A673 (cell line): ENCODE measurements at regions of chr16 and their contacts with region 1.

Region 1: DNA sequence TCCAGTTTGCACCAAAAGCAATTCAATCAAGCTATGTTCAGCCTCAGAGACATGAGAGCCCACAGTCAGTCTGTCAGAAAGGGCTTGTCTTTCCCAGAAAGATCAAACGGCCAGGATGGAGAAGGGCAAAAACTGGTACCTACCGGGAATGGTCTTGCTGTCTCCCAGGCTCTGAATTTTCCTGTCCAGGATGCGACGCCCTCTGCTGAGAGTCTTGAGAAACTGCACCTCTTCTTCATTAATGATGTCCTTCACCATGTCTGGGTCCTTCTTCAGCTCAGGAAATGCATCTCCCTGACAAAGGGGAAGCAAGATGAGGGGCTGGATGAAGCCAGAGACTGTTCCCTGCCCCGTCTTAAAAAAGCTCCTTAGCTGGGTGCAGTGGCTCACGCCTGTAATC is 15.8 kb upstream of the EXOSC6 start:
- DNase-seq: peak; percentile 75
- H3K4me3 ChIP-seq: no peak overlapping the region
- H3K27ac ChIP-seq: no peak overlapping the region
- H3K4me1 ChIP-seq: no peaks in the 10 kb centered on the region
- H3K27me3 ChIP-seq: no peaks in the 10 kb centered on the region
- CTCF ChIP-seq: peak; percentile 72

Region 2: GRCh38 chr16:69906838-69907401 is 360.6 kb before region 1 on chr16:
- CTCF ChIA-PET with region 1: no interaction called
- POLR2A ChIA-PET with region 1: no interaction called
- intact Hi-C with region 1: no loop called
- DNase-seq: no peak
- H3K4me3 ChIP-seq: no peak overlapping the region
- H3K27ac ChIP-seq: no peak overlapping the region
- H3K4me1 ChIP-seq: no peaks in the 10 kb centered on the region
- H3K27me3 ChIP-seq: no peaks in the 10 kb centered on the region
- CTCF ChIP-seq: no peak

Region 3: DNA sequence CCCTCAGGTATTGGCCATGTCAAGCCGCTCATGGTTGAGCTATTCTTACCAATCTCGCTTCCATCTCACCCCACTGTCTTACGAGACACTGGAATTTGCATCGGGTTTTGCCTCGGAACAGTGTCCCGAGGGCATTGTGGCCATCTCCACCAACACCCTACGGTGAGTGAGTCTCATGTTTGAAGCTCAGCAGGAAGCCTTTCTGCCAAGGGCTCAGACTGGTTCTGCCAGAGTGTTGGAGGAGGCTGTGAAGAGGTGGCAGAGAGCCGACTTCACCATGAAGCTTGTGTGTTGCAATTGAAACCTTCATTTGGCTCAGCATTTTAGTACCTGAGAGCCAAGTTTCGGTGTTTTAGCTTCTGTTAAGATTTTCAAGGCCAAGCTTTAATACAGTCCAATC is 294.1 kb after region 1 on chr16:
- CTCF ChIA-PET with region 1: no interaction called
- POLR2A ChIA-PET with region 1: no interaction called
- intact Hi-C with region 1: loop called (anchors 5 kb)
- DNase-seq: no peak
- H3K4me3 ChIP-seq: no peak overlapping the region
- H3K27ac ChIP-seq: no peak overlapping the region
- H3K4me1 ChIP-seq: no peaks in the 10 kb centered on the region
- H3K27me3 ChIP-seq: no peaks in the 10 kb centered on the region
- CTCF ChIP-seq: no peak